Activated naive CD4-positive, alpha-beta T cell treated with anti-CD3 and anti-CD28 coated beads for 36 hours (primary cell): ENCODE measurements at regions of chr9 and their contacts with region 1.

Region 1: DNA sequence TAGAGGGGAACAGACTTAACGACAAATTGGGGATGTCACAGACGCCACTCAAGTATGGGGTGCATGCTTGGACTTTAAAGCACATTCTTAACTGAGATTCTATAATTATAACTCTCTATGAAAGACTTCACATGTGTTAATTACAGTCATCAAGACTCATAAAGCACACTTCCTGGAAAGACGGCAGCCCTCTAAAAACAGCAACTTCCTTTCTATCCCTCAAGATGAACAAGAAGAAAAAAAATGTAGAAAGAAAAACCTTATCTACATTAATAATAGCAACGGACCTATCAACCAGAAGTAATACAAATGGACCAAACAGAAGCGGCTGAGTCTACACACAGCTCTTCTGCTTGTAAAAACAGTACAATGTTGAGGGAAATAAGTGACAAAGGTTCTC is 21.2 kb downstream of the GNAQ start:
- DNase-seq: peak; percentile 42
- H3K4me3 Mint-ChIP-seq: peak overlapping the region; percentile 41
- H3K27ac Mint-ChIP-seq: peak overlapping the region; percentile 80
- H3K4me1 Mint-ChIP-seq: peaks cover 53% of the 10 kb centered on the region
- H3K27me3 Mint-ChIP-seq: no peaks in the 10 kb centered on the region

Region 2: GRCh38 chr9:77944556-77945243 is 65.7 kb before region 1 on chr9:
- CTCF ChIA-PET with region 1: no interaction called
- intact Hi-C with region 1: no loop called
- DNase-seq: peak; percentile 38
- H3K4me3 Mint-ChIP-seq: peak overlapping the region; percentile 32
- H3K27ac Mint-ChIP-seq: peak overlapping the region; percentile 67
- H3K4me1 Mint-ChIP-seq: peaks cover 51% of the 10 kb centered on the region
- H3K27me3 Mint-ChIP-seq: no peaks in the 10 kb centered on the region

Region 3: GRCh38 chr9:77997611-77998284 is 12.7 kb before region 1 on chr9:
- CTCF ChIA-PET with region 1: no interaction called
- intact Hi-C with region 1: loop called (anchors 1 kb)
- DNase-seq: no peak
- H3K4me3 Mint-ChIP-seq: no peak overlapping the region
- H3K27ac Mint-ChIP-seq: no peak overlapping the region
- H3K4me1 Mint-ChIP-seq: peaks cover 44% of the 10 kb centered on the region
- H3K27me3 Mint-ChIP-seq: no peaks in the 10 kb centered on the region

Region 4: GRCh38 chr9:78029551-78030295 is 19.3 kb after region 1 on chr9:
- CTCF ChIA-PET with region 1: interaction called, 3 read pairs
- intact Hi-C with region 1: loop called (anchors 1 kb)
- DNase-seq: peak; percentile 32
- H3K4me3 Mint-ChIP-seq: peak overlapping the region; percentile 87
- H3K27ac Mint-ChIP-seq: peak overlapping the region; percentile 80
- H3K4me1 Mint-ChIP-seq: peaks cover 53% of the 10 kb centered on the region
- H3K27me3 Mint-ChIP-seq: no peaks in the 10 kb centered on the region

Region 5: GRCh38 chr9:78714576-78714975 is 704.1 kb after region 1 on chr9:
- CTCF ChIA-PET with region 1: no interaction called
- intact Hi-C with region 1: no loop called
- DNase-seq: no peak
- H3K4me3 Mint-ChIP-seq: no peak overlapping the region
- H3K27ac Mint-ChIP-seq: no peak overlapping the region
- H3K4me1 Mint-ChIP-seq: no peaks in the 10 kb centered on the region
- H3K27me3 Mint-ChIP-seq: no peaks in the 10 kb centered on the region